ENCODE measurements at regions of chr11 and their contacts with region 1.

Region 1: DNA sequence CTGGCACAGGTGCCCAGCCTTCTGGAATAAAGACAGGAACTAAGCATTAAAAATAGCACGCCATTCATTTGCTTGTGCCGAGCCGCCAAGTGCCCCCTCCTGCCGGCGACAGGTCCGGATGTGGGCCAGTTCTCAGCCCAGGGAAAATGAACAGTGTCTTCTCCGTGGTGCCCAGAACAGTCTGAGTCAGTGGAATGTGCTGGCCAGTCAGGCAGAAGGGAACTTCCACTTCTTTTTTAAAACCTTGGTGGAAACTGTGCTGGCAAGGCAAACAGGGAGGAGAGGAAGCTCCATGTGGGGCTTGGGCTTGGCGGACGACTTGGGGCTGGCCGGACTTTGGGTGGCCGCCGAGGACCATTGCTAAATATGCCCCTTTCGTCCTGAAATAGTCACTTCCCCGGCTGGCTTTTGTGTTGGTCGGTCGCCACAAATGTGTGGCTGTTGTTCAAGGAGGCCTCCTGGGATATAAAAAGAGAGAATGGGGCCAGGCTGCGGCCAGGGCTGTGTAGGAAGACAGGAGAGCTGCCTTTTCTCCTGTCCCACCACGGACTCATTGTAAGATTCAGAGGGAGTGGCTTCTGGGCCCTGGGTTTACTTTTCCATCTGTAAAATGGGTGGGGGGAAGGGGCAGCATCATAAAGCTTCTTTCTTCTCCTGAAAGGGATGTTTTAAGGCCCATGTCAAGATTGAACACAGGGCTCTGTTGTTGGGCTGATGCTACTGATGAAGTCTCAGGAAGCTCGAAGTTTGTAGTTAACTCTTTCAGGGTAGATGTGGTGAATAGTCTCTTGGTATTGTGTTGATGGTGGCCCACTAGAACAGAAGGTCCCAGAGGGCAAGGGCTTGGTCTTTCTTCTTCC is 101.0 kb downstream of the PTPRJ start:
- DNase-seq: no peak
- ATAC-seq: no peak
- H3K4me3 ChIP-seq: no peak overlapping the region
- H3K27ac ChIP-seq: no peak overlapping the region
- H3K4me1 ChIP-seq: peaks cover 0 to 3% of the 10 kb centered on the region in 2 experiments; a peak in 2 of 4 replicates
- H3K27me3 ChIP-seq: no peaks in the 10 kb centered on the region
- CTCF ChIP-seq: no peak
- POLR2A ChIP-seq: no peak
- RAD21 ChIP-seq: no peak

Region 2: GRCh38 chr11:47296045-47296444 is 785.3 kb before region 1 on chr11:
- CTCF ChIA-PET with region 1: no interaction called
- POLR2A ChIA-PET with region 1: no interaction called
- RAD21 ChIA-PET with region 1: no interaction called
- intact Hi-C with region 1: no loop called
- DNase-seq: no peak
- ATAC-seq: no peak
- H3K4me3 ChIP-seq: no peak overlapping the region
- H3K27ac ChIP-seq: no peak overlapping the region
- H3K4me1 ChIP-seq: no peaks in the 10 kb centered on the region
- H3K27me3 ChIP-seq: no peaks in the 10 kb centered on the region
- CTCF ChIP-seq: no peak
- POLR2A ChIP-seq: no peak
- RAD21 ChIP-seq: no peak

Region 3: GRCh38 chr11:47705721-47706120 is 375.7 kb before region 1 on chr11:
- CTCF ChIA-PET with region 1: no interaction called
- POLR2A ChIA-PET with region 1: no interaction called
- RAD21 ChIA-PET with region 1: no interaction called
- intact Hi-C with region 1: no loop called
- DNase-seq: no peak
- ATAC-seq: no peak
- H3K4me3 ChIP-seq: no peak overlapping the region
- H3K27ac ChIP-seq: no peak overlapping the region
- H3K4me1 ChIP-seq: no peaks in the 10 kb centered on the region
- H3K27me3 ChIP-seq: no peaks in the 10 kb centered on the region
- CTCF ChIP-seq: no peak
- POLR2A ChIP-seq: no peak
- RAD21 ChIP-seq: no peak

Region 4: GRCh38 chr11:48028914-48029680 is 52.3 kb before region 1 on chr11:
- CTCF ChIA-PET with region 1: no interaction called
- POLR2A ChIA-PET with region 1: no interaction called
- RAD21 ChIA-PET with region 1: no interaction called
- intact Hi-C with region 1: loop called (anchors 5 kb)
- DNase-seq: no peak
- ATAC-seq: no peak
- H3K4me3 ChIP-seq: no peak overlapping the region
- H3K27ac ChIP-seq: no peak overlapping the region
- H3K4me1 ChIP-seq: peaks cover 16 to 26% of the 10 kb centered on the region in 2 experiments; a peak in 3 of 4 replicates
- H3K27me3 ChIP-seq: no peaks in the 10 kb centered on the region
- CTCF ChIP-seq: no peak
- POLR2A ChIP-seq: no peak
- RAD21 ChIP-seq: no peak

Region 5: DNA sequence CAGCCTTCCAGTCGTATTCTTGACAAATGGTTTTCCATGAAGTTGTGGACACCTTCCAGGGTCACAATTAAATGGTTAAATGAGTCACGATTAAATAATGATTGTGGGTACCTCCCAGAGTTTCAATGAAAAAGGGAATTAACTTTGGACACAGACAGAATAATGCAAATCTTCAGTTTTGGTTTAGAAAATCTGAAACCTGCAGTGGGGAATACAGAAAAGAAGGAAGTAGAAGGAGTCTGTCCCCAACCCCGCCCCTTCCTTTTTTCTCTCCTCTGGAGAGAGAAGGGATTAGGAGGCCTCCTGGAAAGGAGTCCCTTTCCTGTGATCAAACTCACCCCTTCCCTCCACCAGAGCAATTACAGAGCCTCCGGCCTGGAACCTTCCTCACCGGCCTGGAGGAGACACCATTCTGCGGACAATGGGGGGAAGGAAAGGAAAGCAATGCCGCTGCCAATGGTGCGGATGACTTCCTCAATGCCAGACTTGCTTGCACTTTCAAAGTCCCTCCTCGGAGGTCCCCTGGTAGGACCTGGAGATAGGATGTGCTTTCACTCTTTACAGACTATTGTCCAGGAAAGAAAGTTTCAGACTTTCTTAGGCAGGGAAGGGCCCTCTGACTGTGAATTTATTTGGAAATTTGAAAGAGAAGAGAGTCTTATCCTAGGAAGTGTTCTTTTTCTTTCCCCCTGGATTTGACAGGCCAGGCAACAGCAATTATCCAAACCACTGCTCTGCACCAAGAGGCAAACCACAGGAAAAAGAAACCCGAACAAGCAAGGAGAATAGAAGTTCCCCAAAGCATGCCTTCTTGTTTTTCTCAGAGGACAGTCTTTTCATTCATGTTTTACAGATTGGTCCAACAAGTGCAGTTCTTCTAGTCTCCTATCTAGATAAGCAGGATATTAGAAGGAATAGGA is 14.2 kb before region 1 on chr11:
- CTCF ChIA-PET with region 1: no interaction called
- POLR2A ChIA-PET with region 1: no interaction called
- RAD21 ChIA-PET with region 1: no interaction called
- intact Hi-C with region 1: no loop called
- DNase-seq: no peak
- ATAC-seq: no peak
- H3K4me3 ChIP-seq: no peak overlapping the region
- H3K27ac ChIP-seq: no peak overlapping the region
- H3K4me1 ChIP-seq: peaks cover 28 to 35% of the 10 kb centered on the region in 2 experiments
- H3K27me3 ChIP-seq: no peaks in the 10 kb centered on the region
- CTCF ChIP-seq: no peak
- POLR2A ChIP-seq: no peak
- RAD21 ChIP-seq: no peak

Region 6: DNA sequence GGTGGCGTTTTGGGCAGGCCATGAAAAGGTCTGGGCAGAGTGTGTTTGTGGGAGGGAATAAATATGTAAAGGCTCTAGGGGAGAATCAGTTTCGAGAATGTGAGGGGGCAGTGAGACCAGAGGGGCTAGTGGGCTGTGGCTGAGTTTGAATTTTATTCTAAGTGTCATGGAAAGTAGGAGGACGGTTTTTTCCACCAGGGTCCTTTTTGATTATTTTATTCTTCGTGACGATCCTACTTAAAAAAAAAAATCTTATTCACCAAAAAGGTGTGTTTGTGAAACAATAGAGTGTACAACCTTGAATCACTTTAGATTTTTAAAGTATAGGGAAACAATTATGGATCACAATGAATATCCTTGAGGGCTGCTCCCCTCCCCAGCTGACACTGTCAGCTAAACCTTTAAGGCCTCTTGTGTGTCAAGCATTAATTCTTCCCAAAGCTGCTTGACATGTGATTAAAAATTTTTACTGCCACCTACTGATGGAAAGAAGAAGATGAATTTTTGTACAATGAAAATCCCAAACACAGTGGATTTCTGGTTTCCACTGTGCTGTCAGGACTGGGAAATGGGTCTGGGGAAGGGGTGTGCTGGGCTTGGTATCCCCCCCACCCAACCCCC is 27.8 kb after region 1 on chr11:
- CTCF ChIA-PET with region 1: no interaction called
- POLR2A ChIA-PET with region 1: no interaction called
- RAD21 ChIA-PET with region 1: no interaction called
- intact Hi-C with region 1: no loop called
- DNase-seq: peak; percentile 37
- ATAC-seq: peak; percentile 74
- H3K4me3 ChIP-seq: no peak overlapping the region
- H3K27ac ChIP-seq: 0 out of 2 replicates have a peak overlapping the region, but pooled peaks have one; percentile 14
- H3K4me1 ChIP-seq: peaks cover 17 to 26% of the 10 kb centered on the region in 2 experiments; a peak in 3 of 4 replicates
- H3K27me3 ChIP-seq: no peaks in the 10 kb centered on the region
- CTCF ChIP-seq: peak; percentile 26 to 63 (median 48); a peak in 4 of 6 replicates
- POLR2A ChIP-seq: no peak
- RAD21 ChIP-seq: peak; percentile 73